HCT116 (cell line): ENCODE measurements at regions of chr5 and their contacts with region 1.

Region 1: DNA sequence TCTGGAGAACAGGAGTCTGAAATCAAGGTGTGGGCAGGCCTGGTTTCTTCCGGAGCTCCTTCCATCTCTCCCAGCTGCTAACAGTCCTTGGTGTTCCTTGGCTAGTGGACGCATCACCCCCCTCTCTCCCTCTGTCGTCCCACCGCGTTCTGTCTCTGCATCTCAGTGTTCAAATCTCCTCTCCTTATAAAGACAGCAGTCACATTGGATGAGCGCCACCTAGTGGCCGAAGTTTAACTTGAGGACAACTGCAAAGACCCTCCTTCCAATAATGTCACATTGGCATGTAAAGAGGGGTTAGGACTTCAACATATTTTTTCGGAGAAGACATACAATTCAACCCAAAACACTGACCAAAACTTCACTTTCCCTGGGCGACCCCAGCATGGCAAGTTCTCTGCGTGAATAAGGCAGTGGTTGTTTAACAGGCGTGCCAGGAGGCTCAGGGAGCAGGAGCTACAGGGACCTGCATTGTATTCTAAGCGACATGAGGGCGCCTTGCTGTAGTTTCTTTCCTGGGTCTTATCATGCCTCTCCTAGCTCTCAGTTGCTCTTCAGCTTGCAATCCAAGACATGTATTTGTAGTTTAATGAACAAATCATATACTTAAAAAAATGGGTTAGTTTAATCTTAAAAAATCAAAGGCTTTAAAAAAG is 27.9 kb upstream of the BASP1 start:
- DNase-seq: peak; percentile 85
- ATAC-seq: peak; percentile 88
- H3K4me3 ChIP-seq: peak overlapping the region in 1 of 2 experiments; percentile 30; a peak in 2 of 4 replicates
- H3K27ac ChIP-seq: no peak overlapping the region
- H3K4me1 ChIP-seq: peaks cover 4 to 14% of the 10 kb centered on the region in 2 experiments
- H3K27me3 ChIP-seq: no peaks in the 10 kb centered on the region
- CTCF ChIP-seq: peak; percentile 74 to 98 (median 81)
- POLR2A ChIP-seq: no peak
- RAD21 ChIP-seq: peak; percentile 82

Region 2: DNA sequence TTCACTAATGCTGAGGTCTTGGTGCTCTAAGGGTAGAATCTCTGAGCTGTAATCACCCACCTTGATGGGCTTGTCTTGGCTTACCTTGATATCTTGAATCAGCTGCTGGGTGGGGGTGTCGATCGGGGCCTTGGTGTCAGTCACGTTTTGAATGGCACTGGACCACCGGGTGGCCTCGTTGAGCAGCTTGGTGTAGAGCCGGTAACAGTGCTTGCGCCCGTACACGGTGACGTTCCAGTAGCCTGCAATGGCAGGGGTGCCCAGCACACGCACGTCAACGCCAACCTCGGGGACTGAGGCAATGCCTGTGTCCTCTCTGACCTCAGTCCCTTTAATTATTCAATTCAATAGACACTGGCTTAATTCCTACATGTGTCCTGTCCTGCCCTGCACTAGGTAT is 509.6 kb before region 1 on chr5:
- CTCF ChIA-PET with region 1: interaction called, 3 read pairs
- POLR2A ChIA-PET with region 1: no interaction called
- RAD21 ChIA-PET with region 1: no interaction called
- intact Hi-C with region 1: loop called (anchors 1 kb)
- DNase-seq: no peak
- ATAC-seq: peak; percentile 83
- H3K4me3 ChIP-seq: no peak overlapping the region
- H3K27ac ChIP-seq: no peak overlapping the region
- H3K4me1 ChIP-seq: no peaks in the 10 kb centered on the region
- H3K27me3 ChIP-seq: no peaks in the 10 kb centered on the region
- CTCF ChIP-seq: peak in 2 of 3 experiments; percentile 31 to 38; a peak in 4 of 6 replicates
- POLR2A ChIP-seq: no peak
- RAD21 ChIP-seq: no peak

Region 3: GRCh38 chr5:16690243-16690852 is 499.2 kb before region 1 on chr5:
- CTCF ChIA-PET with region 1: interaction called, 34 read pairs
- POLR2A ChIA-PET with region 1: no interaction called
- RAD21 ChIA-PET with region 1: interaction called in 1 of 2 experiments, 5 read pairs
- intact Hi-C with region 1: loop called (anchors 1 kb)
- DNase-seq: peak; percentile 19
- ATAC-seq: peak; percentile 97
- H3K4me3 ChIP-seq: no peak overlapping the region
- H3K27ac ChIP-seq: no peak overlapping the region
- H3K4me1 ChIP-seq: no peaks in the 10 kb centered on the region
- H3K27me3 ChIP-seq: no peaks in the 10 kb centered on the region
- CTCF ChIP-seq: peak; percentile 41 to 84 (median 78); a peak in 5 of 6 replicates
- POLR2A ChIP-seq: no peak
- RAD21 ChIP-seq: peak; percentile 42; the same call in 1 of the 2 replicates

Region 4: DNA sequence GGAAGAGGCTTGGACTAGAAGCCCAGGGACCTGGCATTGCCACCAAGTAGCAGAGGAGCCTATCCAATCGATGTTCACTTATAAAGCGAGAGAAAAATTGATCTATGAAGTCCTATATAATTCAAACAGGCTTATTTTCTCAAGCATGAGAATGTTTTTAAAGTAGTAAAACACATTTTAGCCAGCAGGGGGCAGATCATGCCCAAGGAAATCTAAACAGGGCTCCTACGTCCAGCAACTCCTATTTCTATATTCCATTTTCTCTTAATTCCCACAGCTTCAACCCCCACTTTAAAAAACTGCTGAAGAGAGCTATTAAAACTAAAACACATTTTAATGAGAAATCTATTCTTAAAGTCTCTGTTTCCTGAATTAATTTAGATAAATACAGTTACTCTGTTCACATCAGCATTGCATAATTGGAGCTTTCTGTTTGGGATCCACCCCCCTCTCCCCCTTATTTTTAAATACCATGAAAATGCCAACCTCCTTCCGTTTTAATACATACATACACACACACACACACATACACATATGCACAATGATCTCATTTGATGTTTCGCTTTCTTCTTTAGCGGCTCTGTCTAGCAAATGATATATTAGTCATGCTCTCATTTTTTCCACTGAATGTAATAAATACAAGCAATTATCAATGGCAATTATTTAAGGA is 398.3 kb before region 1 on chr5:
- CTCF ChIA-PET with region 1: interaction called, 39 read pairs
- POLR2A ChIA-PET with region 1: interaction called, 4 read pairs
- RAD21 ChIA-PET with region 1: interaction called, 4 to 5 read pairs
- intact Hi-C with region 1: loop called (anchors 1 kb)
- DNase-seq: peak; percentile 37
- ATAC-seq: peak; percentile 62
- H3K4me3 ChIP-seq: no peak overlapping the region
- H3K27ac ChIP-seq: no peak overlapping the region
- H3K4me1 ChIP-seq: no peaks in the 10 kb centered on the region
- H3K27me3 ChIP-seq: no peaks in the 10 kb centered on the region
- CTCF ChIP-seq: peak; percentile 49 to 69 (median 56); a peak in 5 of 6 replicates
- POLR2A ChIP-seq: no peak
- RAD21 ChIP-seq: peak; percentile 78

Region 5: DNA sequence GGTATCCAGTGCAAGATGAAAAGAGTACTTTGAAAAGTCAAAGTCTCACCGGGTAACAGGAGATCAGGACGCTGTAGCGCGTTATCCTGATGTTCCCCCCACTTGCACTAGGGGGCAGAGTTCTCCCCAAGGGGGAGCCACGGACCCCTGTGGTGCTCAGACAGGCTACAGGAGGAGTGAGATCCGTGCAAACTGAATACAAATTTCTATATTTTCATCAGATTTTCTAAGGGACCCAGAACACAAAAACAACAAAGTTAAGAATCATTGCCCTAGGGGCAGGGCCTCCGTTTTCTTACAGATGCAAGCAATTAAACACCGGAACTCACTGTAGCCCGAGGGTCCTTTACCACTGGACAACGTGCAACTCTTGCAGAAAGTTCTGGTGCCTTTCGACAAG is 255.4 kb before region 1 on chr5:
- CTCF ChIA-PET with region 1: interaction called, 9 read pairs
- POLR2A ChIA-PET with region 1: interaction called, 3 read pairs
- RAD21 ChIA-PET with region 1: no interaction called
- intact Hi-C with region 1: loop called (anchors 2 kb)
- DNase-seq: peak; percentile 63
- ATAC-seq: peak; percentile 50
- H3K4me3 ChIP-seq: peak overlapping the region; percentile 81 to 82; a peak in 3 of 4 replicates
- H3K27ac ChIP-seq: no peak overlapping the region
- H3K4me1 ChIP-seq: peaks cover 28 to 34% of the 10 kb centered on the region in 2 experiments
- H3K27me3 ChIP-seq: peaks cover 5% of the 10 kb centered on the region; the same call in 1 of the 2 replicates
- CTCF ChIP-seq: peak; percentile 52 to 94 (median 92); a peak in 5 of 6 replicates
- POLR2A ChIP-seq: no peak
- RAD21 ChIP-seq: peak; percentile 65

Region 6: GRCh38 chr5:17204133-17204489 is 14.6 kb after region 1 on chr5:
- CTCF ChIA-PET with region 1: interaction called, 10 read pairs
- POLR2A ChIA-PET with region 1: no interaction called
- RAD21 ChIA-PET with region 1: no interaction called
- intact Hi-C with region 1: no loop called
- DNase-seq: no peak
- ATAC-seq: peak; percentile 17; the same call in 1 of the 2 replicates
- H3K4me3 ChIP-seq: no peak overlapping the region
- H3K27ac ChIP-seq: no peak overlapping the region
- H3K4me1 ChIP-seq: no peaks in the 10 kb centered on the region
- H3K27me3 ChIP-seq: peaks cover 9% of the 10 kb centered on the region; the same call in 1 of the 2 replicates
- CTCF ChIP-seq: no peak
- POLR2A ChIP-seq: no peak
- RAD21 ChIP-seq: no peak

Region 7: DNA sequence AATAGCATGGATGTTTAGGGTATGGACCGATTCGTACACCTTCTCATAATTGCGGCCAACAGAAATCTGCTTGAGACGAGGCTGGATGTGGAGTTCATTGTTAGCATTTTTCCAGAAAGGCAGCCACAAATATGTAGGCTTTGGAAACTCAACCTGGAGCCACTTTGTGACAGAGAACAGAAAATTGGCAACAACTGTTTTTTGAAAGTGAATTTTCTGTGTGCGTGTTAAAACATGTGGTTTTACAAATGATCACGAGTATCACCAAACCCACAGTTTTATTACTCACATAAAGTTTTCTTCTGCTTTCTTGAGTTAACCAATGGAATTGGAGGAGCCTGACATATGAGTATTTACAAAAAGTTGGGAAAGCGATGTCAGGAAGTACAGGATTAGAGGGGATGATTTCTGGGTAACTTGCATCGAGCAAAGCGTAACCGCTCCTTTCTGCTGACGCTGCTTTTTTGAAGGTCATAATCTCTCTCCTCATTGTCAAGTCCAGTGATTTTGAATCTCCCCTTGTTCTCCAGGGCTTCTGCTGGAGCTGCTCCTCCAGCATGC is 170.0 kb after region 1 on chr5:
- CTCF ChIA-PET with region 1: no interaction called
- POLR2A ChIA-PET with region 1: no interaction called
- RAD21 ChIA-PET with region 1: no interaction called
- intact Hi-C with region 1: no loop called
- DNase-seq: no peak
- ATAC-seq: no peak
- H3K4me3 ChIP-seq: no peak overlapping the region
- H3K27ac ChIP-seq: no peak overlapping the region
- H3K4me1 ChIP-seq: no peaks in the 10 kb centered on the region
- H3K27me3 ChIP-seq: no peaks in the 10 kb centered on the region
- CTCF ChIP-seq: no peak
- POLR2A ChIP-seq: no peak
- RAD21 ChIP-seq: no peak

Region 8: GRCh38 chr5:18051953-18052352 is 862.4 kb after region 1 on chr5:
- CTCF ChIA-PET with region 1: no interaction called
- POLR2A ChIA-PET with region 1: no interaction called
- RAD21 ChIA-PET with region 1: no interaction called
- intact Hi-C with region 1: no loop called
- DNase-seq: no peak
- ATAC-seq: no peak
- H3K4me3 ChIP-seq: no peak overlapping the region
- H3K27ac ChIP-seq: no peak overlapping the region
- H3K4me1 ChIP-seq: no peaks in the 10 kb centered on the region
- H3K27me3 ChIP-seq: no peaks in the 10 kb centered on the region
- CTCF ChIP-seq: no peak
- POLR2A ChIP-seq: no peak
- RAD21 ChIP-seq: no peak